Vagina (tissue), 2 donors: ENCODE measurements at regions of chr11 and their contacts with region 1.

Region 1: GRCh38 chr11:118051611-118052461 is 25.0 kb upstream of the TMPRSS4 start:
- DNase-seq: peak in 1 of 2 donors; percentile 88
- H3K4me3 ChIP-seq: no peak overlapping the region
- H3K27ac ChIP-seq: no peak overlapping the region
- H3K4me1 ChIP-seq: no peaks in the 10 kb centered on the region
- H3K27me3 ChIP-seq: no peaks in the 10 kb centered on the region
- CTCF ChIP-seq: no peak
- POLR2A ChIP-seq: no peak

Region 2: DNA sequence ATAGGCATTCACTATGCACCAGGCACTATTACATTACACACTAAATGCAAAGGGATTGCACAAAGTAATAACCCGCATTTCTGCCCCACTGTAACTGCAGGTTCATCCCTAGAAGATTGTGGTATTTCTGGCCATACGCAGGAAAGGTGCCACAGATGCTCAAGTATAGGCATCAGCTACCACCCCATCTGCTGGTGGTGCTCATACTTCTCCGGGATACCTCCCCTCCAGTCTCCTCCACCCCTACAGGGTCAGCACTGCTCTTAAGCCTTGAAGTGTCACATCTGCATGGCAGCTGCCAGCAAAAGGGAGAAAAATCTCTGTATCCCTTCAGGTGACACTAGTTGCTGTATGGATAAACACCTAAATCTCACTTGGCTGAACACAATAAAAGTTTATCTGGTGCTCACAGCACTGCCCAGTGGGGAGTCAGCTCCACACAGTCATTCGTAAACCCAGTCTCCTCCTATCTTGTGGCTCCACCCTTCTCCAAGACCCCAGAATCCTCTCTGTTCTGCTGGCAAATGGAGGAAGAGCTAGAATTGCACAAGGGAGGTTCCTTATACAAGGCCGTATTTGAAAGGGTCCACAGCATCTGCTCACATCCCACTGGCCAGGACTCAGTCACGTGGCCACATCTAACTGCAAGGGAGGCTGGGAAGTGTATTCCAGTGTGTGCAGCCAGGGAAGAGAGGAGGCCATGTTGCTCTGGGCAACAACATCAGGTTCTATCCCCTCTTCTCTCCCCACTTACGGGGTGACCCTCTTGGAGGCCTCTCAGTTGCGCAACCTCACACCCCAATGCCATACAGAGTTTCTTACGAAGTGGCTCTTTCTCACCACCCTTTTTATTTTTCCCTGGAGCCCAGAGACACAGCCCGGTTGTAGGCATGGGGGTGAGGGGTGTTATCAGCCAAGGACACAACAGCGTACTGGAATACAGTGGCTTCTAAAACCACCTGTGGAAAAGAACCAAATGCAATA is 1393.7 kb before region 1 on chr11:
- intact Hi-C with region 1: no loop called
- DNase-seq: peak; percentile 58 to 74
- H3K4me3 ChIP-seq: no peak overlapping the region
- H3K27ac ChIP-seq: no peak overlapping the region
- H3K4me1 ChIP-seq: no peaks in the 10 kb centered on the region
- H3K27me3 ChIP-seq: no peaks in the 10 kb centered on the region
- CTCF ChIP-seq: no peak
- POLR2A ChIP-seq: no peak

Region 3: DNA sequence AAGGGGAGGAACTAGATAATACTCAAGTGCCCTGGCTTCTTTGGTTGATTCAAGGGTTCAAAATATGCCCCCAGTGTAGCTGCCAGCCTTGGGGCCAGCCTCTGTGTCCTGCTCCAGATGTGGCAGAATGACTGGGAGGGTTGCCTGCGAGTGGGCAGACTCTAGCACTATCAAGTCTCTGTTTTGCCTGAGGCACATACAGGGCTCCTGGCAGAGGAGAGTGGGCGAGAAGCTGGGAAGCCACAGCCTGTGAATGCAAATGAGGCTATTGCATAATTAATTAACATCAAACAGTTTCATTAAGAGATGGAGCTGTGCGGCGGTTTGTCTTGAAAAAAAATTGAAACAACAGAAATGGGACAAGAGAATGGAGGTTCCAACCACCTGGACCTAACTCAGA is 1329.8 kb before region 1 on chr11:
- intact Hi-C with region 1: loop called (anchors 5 kb)
- DNase-seq: no peak
- H3K4me3 ChIP-seq: no peak overlapping the region
- H3K27ac ChIP-seq: no peak overlapping the region
- H3K4me1 ChIP-seq: peaks cover 12% of the 10 kb centered on the region
- H3K27me3 ChIP-seq: no peaks in the 10 kb centered on the region
- CTCF ChIP-seq: no peak
- POLR2A ChIP-seq: no peak

Region 4: GRCh38 chr11:117807482-117808327 is 244.1 kb before region 1 on chr11:
- intact Hi-C with region 1: loop called (anchors 2 kb)
- DNase-seq: no peak
- H3K4me3 ChIP-seq: no peak overlapping the region
- H3K27ac ChIP-seq: no peak overlapping the region
- H3K4me1 ChIP-seq: peaks cover 5% of the 10 kb centered on the region
- H3K27me3 ChIP-seq: no peaks in the 10 kb centered on the region
- CTCF ChIP-seq: peak; percentile 61 to 94 (median 74)
- POLR2A ChIP-seq: no peak

Region 5: DNA sequence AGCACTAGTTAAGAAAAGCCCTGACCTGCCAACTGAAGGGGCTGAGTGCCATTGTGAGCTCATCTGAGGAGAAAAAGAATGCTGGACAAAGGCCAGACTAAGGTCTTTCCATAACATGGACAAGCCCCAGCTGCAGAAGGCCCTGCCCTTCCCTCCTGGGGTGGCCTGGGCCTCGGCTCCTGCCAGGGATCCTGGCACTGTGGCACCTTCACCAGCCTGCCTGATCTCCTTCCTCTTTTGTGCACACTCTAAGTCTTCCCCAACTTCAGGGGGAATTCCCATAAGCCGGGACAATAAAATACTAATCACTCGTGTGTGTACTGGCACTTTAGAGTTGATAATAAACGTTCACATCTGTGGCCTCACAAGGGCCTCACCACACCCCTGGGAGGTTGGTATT is 132.5 kb before region 1 on chr11:
- intact Hi-C with region 1: no loop called
- DNase-seq: no peak
- H3K4me3 ChIP-seq: no peak overlapping the region
- H3K27ac ChIP-seq: no peak overlapping the region
- H3K4me1 ChIP-seq: no peaks in the 10 kb centered on the region
- H3K27me3 ChIP-seq: no peaks in the 10 kb centered on the region
- CTCF ChIP-seq: no peak
- POLR2A ChIP-seq: no peak

Region 6: DNA sequence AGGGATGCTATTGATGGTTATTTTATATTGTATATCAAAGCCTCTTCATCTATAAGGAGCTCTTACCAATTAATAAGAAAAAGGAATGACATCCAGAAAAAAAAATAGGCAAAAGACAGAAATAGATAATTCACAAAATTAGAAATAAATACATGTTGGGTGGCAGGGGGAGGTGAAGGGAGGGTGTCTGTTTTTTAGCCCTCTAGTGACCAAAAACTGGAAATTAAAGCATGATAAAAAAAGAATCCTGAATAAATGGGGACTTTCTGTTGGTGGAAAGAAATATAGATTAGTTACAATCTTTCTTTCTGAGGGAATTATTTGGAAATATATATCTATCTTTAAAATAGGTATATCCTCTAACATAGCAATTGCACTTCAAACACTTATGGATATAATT is 433.4 kb after region 1 on chr11:
- intact Hi-C with region 1: no loop called
- DNase-seq: no peak
- H3K4me3 ChIP-seq: no peak overlapping the region
- H3K27ac ChIP-seq: no peak overlapping the region
- H3K4me1 ChIP-seq: no peaks in the 10 kb centered on the region
- H3K27me3 ChIP-seq: no peaks in the 10 kb centered on the region
- CTCF ChIP-seq: no peak
- POLR2A ChIP-seq: no peak